HAP-1 (cell line): ENCODE measurements at regions of chr6 and their contacts with region 1.

Region 1: DNA sequence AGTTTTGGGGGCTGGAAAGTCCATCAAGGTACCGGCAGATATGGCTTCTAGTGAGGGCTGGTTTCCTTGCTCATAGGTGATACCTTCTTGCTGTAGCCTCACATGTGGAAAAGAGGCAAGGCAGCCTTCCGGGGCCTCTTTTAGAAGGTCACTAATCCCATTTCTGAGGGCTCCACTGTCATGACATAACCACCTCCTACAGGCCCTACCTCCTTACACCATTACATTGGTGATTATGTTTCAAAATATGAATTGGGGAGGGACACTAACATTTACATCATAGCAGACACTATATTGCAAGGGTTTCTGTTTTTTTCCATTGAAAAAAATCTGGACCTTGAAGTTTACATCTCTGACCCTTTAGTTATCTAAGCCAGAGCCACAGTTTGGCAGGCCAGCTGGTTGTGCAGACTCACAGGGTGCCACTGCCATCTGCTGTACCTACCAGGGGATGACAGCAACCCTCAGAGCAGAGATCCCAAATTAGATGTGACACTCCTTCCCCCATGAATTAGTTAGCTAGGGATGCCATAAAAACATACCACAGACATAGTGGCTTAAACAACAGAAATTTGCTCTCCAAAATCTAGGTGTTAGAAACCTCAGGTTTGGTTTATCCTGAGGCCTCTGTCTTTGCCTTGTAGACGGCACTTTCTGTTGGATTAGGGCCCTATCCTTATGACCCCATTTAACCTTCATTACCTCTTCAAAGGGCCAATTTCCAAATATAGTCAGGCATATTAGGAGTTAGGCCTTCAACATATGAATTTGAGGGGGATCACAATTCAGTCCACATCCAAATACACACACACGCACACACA is 166.4 kb upstream of the RNF217 start:
- DNase-seq: peak; percentile 40 to 61
- H3K4me3 ChIP-seq: no peak overlapping the region
- H3K4me1 ChIP-seq: no peaks in the 10 kb centered on the region
- H3K27me3 ChIP-seq: peaks cover 9% of the 10 kb centered on the region; the same call in 1 of the 2 replicates

Region 2: GRCh38 chr6:123802697-123803496 is 993.0 kb before region 1 on chr6:
- in situ Hi-C with region 1: loop called (anchors 25 kb)
- DNase-seq: peak; percentile 49 to 88
- H3K4me3 ChIP-seq: peak overlapping the region; percentile 25
- H3K4me1 ChIP-seq: peaks cover 4% of the 10 kb centered on the region
- H3K27me3 ChIP-seq: peaks cover 71% of the 10 kb centered on the region